ENCODE measurements at regions of chr9 and their contacts with region 1.

Region 1: DNA sequence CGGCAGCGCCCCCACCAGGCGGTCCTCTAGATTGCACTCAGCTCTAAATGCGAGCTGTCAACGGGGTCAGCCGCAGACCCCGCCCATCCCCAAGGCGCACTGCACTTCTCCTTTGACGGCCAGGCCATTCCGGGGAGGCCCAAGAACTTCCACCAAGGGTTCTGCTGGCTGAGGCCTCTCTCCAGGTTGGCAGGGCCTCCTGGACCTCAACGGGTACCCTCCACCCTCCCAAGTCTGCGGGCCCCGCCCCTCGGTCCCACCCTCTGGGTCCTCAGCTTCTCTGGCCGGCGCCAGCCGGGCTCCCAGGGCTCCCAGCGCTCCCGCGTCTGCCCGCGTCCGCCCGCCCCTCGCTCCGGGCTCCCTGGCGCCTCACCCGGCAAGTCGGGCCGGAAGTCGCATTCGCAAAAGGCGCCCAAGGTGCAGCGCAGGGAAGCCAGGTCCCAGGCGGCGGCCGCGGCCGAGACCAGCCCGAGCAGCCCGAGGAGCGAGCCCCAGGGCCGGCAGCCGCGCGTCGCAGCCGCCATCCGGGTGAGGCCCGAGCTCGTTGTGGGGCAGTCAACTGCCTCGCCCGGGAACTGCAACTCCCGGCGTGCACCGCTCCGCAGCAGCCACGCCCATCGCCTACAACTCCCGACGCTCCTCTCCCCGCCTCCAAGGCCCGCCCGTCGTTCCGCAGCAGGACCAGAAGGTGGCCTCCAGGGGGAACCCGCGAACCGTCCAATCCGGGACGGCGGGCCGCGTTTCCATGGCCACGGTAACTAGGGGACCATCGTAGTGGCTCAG is at the start of gene TOR2A:
- DNase-seq: peak; percentile 91
- H3K4me3 ChIP-seq: peak within 1 kb of the TSS; percentile 72
- H3K27ac ChIP-seq: peak within 1 kb of the TSS; percentile 21
- H3K27me3 ChIP-seq: no peaks in the 10 kb centered on the region
- CTCF ChIP-seq: peak; percentile 90
- polyA plus RNA-seq, gene TOR2A: 4.9 and 5.8 TPM in 2 replicates

Region 2: GRCh38 chr9:127611899-127612790 is 122.8 kb before region 1 on chr9 and contains the start of gene STXBP1:
- CTCF ChIA-PET with region 1: interaction called, 14 read pairs
- POLR2A ChIA-PET with region 1: interaction called, 3 read pairs
- DNase-seq: no peak
- H3K4me3 ChIP-seq: peak within 1 kb of the TSS; percentile 82
- H3K27ac ChIP-seq: peak within 1 kb of the TSS; percentile 31
- H3K27me3 ChIP-seq: peaks cover 5% of the 10 kb centered on the region
- CTCF ChIP-seq: peak; percentile 26
- polyA plus RNA-seq, gene STXBP1: 19.8 and 25.0 TPM in 2 replicates

Region 3: DNA sequence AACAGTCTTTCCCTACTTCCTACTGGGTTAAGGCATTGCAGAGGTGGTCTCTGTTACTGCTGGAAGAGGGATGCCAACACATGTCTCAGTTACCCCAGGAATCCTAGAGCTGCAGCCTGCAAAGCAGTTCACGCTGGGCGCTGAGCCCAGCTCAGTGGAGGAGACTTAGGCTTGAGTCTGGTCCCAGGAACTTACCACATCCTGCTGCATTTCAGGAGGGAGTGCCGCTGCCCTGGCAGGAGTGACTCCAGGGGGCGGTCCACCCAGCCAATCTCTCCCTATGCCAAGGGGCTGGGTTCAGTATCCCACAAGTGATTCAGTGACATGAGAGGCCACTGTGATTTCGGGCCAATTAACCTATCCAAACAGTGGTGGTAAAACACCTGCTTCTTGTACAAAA is 11.5 kb before region 1 on chr9:
- CTCF ChIA-PET with region 1: interaction called, 13 read pairs
- POLR2A ChIA-PET with region 1: interaction called, 3 read pairs
- DNase-seq: peak; percentile 21
- H3K4me3 ChIP-seq: no peak overlapping the region
- H3K27ac ChIP-seq: no peak overlapping the region
- H3K27me3 ChIP-seq: no peaks in the 10 kb centered on the region
- CTCF ChIP-seq: 0 out of 2 replicates have a peak, but pooled peaks have one; percentile 9

Region 4: DNA sequence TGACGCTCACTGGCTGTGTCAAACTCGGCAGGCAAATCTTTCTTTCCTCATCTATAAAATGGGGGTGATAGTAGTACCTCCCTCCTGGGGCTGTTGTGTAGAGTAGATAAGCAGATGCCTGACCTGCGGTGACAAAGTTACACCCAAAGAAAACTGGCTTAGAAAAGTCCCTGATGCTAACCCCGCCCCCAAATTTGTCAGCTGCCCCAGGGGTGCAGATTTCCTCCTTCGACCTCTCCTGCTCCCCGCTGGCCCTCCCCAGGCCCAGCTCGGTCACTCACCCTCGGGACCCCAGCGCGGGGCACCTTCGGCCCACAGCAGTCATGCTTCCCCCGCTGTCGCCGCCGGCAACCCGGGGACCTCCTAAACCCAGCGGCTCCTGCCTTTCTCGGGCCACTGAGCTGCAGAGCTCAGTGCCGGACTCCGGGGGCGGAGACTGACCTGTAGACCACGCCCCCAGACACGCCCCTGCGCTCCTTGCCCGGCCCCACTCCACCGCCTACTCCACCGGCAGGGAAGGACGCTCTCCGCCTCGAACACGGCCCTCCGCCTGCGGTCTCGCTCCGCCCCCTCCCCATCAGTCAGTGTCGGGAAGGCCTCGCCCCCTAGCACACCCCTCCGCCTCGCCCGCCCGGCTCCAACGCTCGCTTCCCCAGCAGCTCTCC is 36.1 kb after region 1 on chr9:
- CTCF ChIA-PET with region 1: interaction called, 24 read pairs
- POLR2A ChIA-PET with region 1: no interaction called
- DNase-seq: peak; percentile 92
- H3K4me3 ChIP-seq: peak overlapping the region; percentile 53
- H3K27ac ChIP-seq: no peak overlapping the region
- H3K27me3 ChIP-seq: no peaks in the 10 kb centered on the region
- CTCF ChIP-seq: no peak

Region 5: DNA sequence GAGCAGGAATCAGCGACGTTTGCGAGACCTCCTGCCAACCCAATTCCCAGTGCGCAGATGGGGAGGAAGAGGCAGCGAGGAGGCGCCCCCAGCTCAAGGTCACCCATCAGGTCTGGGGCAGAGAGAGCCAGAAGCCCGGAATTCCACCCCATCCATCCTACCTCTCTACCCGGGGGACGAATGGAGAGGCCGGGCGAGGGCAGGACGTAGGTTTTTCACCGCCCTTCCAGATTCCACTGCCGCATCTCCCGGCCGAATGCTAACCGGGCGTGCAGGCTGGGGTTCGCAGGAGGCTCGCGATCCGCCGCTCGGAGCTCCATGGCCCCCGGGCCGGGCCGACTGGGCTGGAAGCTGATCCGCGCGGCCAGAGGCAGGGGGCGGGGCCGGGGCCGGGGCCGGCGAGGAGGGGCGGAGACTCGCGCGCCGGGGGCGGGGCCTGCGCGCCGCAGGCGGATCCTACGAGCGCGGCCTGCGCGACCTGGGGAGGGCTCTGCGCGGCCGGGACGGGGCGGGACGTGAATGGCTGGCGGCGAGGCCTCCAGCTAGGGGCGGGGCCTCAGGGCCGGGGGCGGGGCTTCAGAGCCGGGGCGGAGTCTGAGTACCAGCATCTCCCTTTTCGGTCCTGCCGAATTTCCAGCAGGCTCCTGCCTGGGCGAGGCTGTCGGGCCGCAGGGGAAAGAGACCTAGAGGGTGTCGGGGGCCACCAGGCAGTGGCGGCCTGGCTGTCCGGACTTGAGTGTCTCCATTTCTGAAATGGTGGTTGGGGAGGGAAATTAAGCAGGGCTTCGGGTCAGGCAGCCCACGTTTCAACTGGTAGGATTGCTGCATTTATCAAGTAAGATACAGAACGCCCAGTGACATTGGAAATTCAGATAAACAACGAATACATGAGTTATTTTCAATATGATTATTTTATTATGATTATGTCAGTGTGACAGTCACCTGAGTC is 182.0 kb after region 1 on chr9 and contains the start of gene ST6GALNAC4:
- CTCF ChIA-PET with region 1: interaction called, 46 read pairs
- POLR2A ChIA-PET with region 1: interaction called, 3 read pairs
- DNase-seq: peak; percentile 70
- H3K4me3 ChIP-seq: peak within 1 kb of the TSS; percentile 80
- H3K27ac ChIP-seq: peak within 1 kb of the TSS; percentile 21
- H3K27me3 ChIP-seq: no peaks in the 10 kb centered on the region
- CTCF ChIP-seq: no peak
- polyA plus RNA-seq, gene ST6GALNAC4: 15.0 and 24.3 TPM in 2 replicates

Measured in AG04450 (cell line).